Prostate gland (tissue), 2 donors: ENCODE measurements at regions of chr20 and their contacts with region 1.

Region 1: DNA sequence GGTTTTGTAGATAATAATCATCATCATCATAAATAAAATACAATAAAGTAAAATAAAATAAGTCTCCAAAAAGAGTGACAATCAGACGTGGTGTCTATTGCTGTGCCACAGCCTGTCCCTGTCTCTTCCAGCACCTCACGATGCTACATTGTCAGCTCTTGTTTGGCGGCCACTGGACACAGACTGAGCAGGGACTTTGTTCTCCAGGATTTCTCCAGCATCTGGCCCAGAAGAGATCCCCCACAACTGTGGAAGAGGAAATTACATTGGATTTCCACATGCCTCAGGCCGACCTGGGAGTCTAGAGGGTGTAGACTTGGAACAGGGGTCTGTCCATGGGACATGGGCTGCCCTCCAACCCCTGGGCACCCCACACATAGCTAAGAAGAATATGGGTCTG is 39.2 kb upstream of the RALY start:
- DNase-seq: no peak
- H3K4me3 ChIP-seq: no peak overlapping the region
- H3K27ac ChIP-seq: no peak overlapping the region
- H3K4me1 ChIP-seq: no peaks in the 10 kb centered on the region
- H3K27me3 ChIP-seq: no peaks in the 10 kb centered on the region
- CTCF ChIP-seq: no peak
- POLR2A ChIP-seq: no peak

Region 2: DNA sequence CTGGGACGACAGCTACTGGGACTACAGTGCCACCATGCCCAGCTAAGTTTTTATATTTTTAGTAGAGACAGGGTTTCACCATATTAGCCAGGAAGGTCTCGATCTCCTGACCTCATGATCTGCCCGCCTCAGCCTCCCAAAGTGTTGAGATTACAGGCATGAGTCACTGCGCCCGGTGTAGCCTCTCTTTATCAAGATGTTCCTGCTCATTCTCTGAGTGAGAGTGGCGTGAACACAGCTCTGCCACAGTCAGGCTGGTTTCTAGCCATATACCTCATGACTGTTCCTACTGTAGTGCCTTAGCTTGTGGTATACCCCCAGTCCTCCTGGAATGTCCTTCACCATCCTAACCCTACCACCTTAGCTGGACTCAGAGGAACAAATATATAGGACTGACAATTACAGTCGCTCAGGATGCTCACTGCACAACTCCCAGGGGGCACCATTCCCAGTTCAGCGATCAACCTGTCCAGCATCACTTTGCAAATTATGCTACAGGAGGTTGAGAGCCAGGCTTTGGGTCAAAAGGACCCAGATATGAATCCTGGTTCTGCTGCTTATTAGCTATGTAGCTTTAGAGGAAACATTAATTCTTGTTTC is 57.1 kb before region 1 on chr20:
- intact Hi-C with region 1: loop called (anchors 10 kb)
- DNase-seq: no peak
- H3K4me3 ChIP-seq: no peak overlapping the region
- H3K27ac ChIP-seq: no peak overlapping the region
- H3K4me1 ChIP-seq: no peaks in the 10 kb centered on the region
- H3K27me3 ChIP-seq: no peaks in the 10 kb centered on the region
- CTCF ChIP-seq: no peak
- POLR2A ChIP-seq: no peak